ENCODE measurements at regions of chr16 and their contacts with region 1.

Region 1: GRCh38 chr16:58629572-58630104 is at the start of gene CNOT1:
- DNase-seq: peak; percentile 98
- H3K4me3 ChIP-seq: peak within 1 kb of the TSS; percentile 96
- H3K27ac ChIP-seq: peak within 1 kb of the TSS; percentile 95 to 100
- H3K4me1 ChIP-seq: peaks cover 9% of the 10 kb centered on the region
- H3K27me3 ChIP-seq: no peaks in the 10 kb centered on the region
- CTCF ChIP-seq: peak in 1 of 3 experiments; percentile 23
- POLR2A ChIP-seq: peak; percentile 74
- total RNA-seq, gene CNOT1: 267 to 272 TPM

Region 2: DNA sequence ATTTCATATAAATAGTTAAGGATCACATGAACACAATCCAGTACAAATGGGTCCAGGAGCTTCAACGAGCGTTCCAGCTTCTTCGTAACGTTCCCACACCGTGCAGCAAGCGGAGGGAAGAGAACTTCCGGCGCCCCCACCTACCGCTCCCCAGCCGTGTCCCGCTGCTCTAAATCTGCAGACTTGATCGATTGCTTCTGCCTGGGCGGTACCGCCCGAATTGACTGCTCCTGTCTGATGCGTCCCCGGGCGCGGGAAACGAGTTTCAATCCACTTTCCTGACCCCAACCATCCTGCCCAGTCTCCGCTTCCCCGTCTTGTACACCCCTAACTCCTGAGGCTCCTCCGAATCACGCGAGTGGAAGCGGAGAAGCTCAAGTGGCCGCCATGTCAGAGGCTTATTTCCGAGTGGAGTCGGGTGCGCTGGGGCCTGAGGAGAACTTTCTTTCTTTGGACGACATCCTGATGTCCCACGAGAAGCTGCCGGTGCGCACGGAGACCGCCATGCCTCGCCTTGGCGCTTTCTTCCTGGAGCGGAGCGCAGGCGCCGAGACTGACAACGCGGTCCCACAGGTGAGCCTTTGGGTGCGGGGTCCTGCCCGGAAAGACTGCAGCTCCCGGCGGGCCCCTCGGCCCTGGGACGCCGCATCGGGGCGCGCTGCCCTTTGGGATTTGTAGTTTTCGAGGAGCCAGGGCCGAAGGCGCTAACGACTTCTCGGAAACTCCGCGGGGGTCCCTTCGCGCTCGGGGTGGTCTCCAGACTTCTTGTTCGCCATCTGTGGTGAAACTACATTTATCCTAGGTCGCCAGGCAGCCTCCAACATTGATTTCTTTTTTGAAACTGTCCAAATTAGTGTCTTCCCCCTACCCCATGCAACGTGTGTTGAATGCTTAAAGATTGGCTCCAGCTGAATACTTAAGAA is 237.2 kb before region 1 on chr16 and contains the start of gene GINS3:
- intact Hi-C with region 1: no loop called
- DNase-seq: peak; percentile 96
- H3K4me3 ChIP-seq: peak within 1 kb of the TSS; percentile 88 to 97
- H3K27ac ChIP-seq: peak within 1 kb of the TSS; percentile 80 to 90
- H3K4me1 ChIP-seq: no peaks in the 10 kb centered on the region
- H3K27me3 ChIP-seq: no peaks in the 10 kb centered on the region
- CTCF ChIP-seq: peak in 1 of 3 experiments; percentile 4
- POLR2A ChIP-seq: no peak
- total RNA-seq, gene GINS3: 16.1 to 16.7 TPM

Region 3: DNA sequence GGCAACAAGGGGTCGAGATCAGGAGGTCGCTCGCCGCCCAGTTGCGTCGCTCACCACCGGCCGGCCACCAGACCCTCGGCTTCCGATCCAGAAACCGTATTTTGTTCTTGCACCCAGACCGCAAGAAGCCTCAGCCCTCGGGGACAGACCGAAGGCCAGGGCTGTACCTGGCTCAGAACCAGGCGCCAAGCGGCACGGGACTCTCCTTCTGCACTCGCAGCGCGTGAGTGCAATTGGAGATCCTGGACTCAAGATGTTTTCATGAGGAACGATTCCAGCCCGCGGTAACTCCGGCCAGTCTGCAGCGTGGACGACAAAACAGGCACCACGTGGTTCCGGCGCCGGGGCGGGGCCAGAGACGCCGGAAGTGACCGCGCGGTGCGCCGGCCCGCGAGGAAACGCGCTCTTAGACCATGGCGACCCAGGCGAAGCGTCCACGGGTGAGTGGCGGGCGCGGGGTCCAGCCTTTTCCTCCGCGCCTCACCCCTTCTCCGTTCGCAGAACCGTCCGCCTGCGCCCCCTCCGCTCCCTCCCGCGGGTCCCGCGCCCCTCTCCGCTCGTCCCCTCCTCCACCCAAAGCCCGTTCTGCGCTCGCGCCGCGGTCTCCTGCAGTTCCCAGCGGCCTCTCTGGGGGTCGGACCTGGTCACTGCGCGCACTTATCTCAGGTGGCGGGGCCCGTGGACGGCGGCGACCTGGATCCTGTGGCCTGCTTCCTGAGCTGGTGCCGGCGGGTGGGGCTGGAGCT is 114.3 kb before region 1 on chr16 and contains the start of gene SETD6:
- intact Hi-C with region 1: loop called (anchors 10 kb)
- DNase-seq: peak; percentile 95
- H3K4me3 ChIP-seq: peak within 1 kb of the TSS; percentile 91 to 94
- H3K27ac ChIP-seq: peak within 1 kb of the TSS; percentile 49 to 82
- H3K4me1 ChIP-seq: peaks cover 4% of the 10 kb centered on the region
- H3K27me3 ChIP-seq: no peaks in the 10 kb centered on the region
- CTCF ChIP-seq: peak in 1 of 3 experiments; percentile 18
- POLR2A ChIP-seq: no peak
- total RNA-seq, gene SETD6: 71.2 to 77.5 TPM

Region 4: GRCh38 chr16:58678716-58679115 is 49.1 kb after region 1 on chr16:
- intact Hi-C with region 1: no loop called
- DNase-seq: peak; percentile 76
- H3K4me3 ChIP-seq: no peak overlapping the region
- H3K27ac ChIP-seq: no peak overlapping the region
- H3K4me1 ChIP-seq: peaks cover 5% of the 10 kb centered on the region
- H3K27me3 ChIP-seq: no peaks in the 10 kb centered on the region
- CTCF ChIP-seq: peak in 1 of 3 experiments; percentile 18
- POLR2A ChIP-seq: no peak